ENCODE measurements at regions of chr19 and their contacts with region 1.

Region 1: GRCh38 chr19:28705008-28705407 is 507.9 kb downstream of the UQCRFS1 start:
- DNase-seq: peak; percentile 18 to 20 (median 19)
- ATAC-seq: peak; percentile 86
- H3K4me3 ChIP-seq: no peak overlapping the region
- H3K27ac ChIP-seq: no peak overlapping the region
- H3K4me1 ChIP-seq: no peaks in the 10 kb centered on the region
- H3K27me3 ChIP-seq: no peaks in the 10 kb centered on the region
- CTCF ChIP-seq: peak in 2 of 3 experiments; percentile 28 to 41; a peak in 5 of 6 replicates
- EP300 ChIP-seq: no peak
- POLR2A ChIP-seq: no peak
- RAD21 ChIP-seq: no peak

Region 2: GRCh38 chr19:28466107-28467045 is 238.6 kb before region 1 on chr19:
- CTCF ChIA-PET with region 1: interaction called, 18 read pairs
- POLR2A ChIA-PET with region 1: no interaction called
- in situ Hi-C with region 1: loop called (anchors 5 kb)
- intact Hi-C with region 1: loop called (anchors 5 kb)
- DNase-seq: peak; percentile 66 to 81 (median 71)
- ATAC-seq: peak; percentile 73
- H3K4me3 ChIP-seq: no peak overlapping the region
- H3K27ac ChIP-seq: peak overlapping the region; percentile 6; the same call in 1 of the 3 replicates
- H3K4me1 ChIP-seq: peaks cover 2 to 16% of the 10 kb centered on the region in 2 experiments; a peak in 3 of 5 replicates
- H3K27me3 ChIP-seq: no peaks in the 10 kb centered on the region
- CTCF ChIP-seq: peak; percentile 73 to 84 (median 80)
- EP300 ChIP-seq: no peak
- POLR2A ChIP-seq: no peak
- RAD21 ChIP-seq: peak; percentile 65 to 77

Region 3: DNA sequence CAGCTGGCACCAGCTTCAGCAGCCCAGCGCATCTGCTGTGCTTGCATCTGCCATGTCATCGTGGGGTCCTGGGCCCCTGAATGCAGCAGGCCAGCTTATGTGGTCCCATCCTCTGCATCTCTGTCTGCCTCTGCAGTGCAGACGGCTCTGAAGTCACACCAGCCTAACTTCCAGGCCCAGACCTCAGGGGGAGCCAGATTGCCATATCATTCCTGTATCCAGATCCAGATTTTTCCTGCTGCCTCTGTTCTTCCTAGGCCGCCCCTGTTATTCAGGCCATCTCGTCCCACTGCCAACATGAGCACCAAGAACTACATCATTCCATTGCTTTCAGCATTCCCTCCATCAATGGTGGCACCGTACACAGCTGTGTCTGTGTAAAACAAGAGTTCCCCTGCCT is 63.6 kb before region 1 on chr19:
- CTCF ChIA-PET with region 1: no interaction called
- POLR2A ChIA-PET with region 1: no interaction called
- in situ Hi-C with region 1: no loop called
- intact Hi-C with region 1: loop called (anchors 5 kb)
- DNase-seq: no peak
- ATAC-seq: no peak
- H3K4me3 ChIP-seq: no peak overlapping the region
- H3K27ac ChIP-seq: no peak overlapping the region
- H3K4me1 ChIP-seq: peaks cover 0 to 6% of the 10 kb centered on the region in 2 experiments; a peak in 2 of 5 replicates
- H3K27me3 ChIP-seq: no peaks in the 10 kb centered on the region
- CTCF ChIP-seq: no peak
- EP300 ChIP-seq: no peak
- POLR2A ChIP-seq: no peak
- RAD21 ChIP-seq: no peak

Region 4: GRCh38 chr19:28847468-28847867 is 142.5 kb after region 1 on chr19:
- CTCF ChIA-PET with region 1: no interaction called
- POLR2A ChIA-PET with region 1: no interaction called
- in situ Hi-C with region 1: no loop called
- intact Hi-C with region 1: no loop called
- DNase-seq: no peak
- ATAC-seq: no peak
- H3K4me3 ChIP-seq: no peak overlapping the region
- H3K27ac ChIP-seq: no peak overlapping the region
- H3K4me1 ChIP-seq: no peaks in the 10 kb centered on the region
- H3K27me3 ChIP-seq: peaks cover 0 to 5% of the 10 kb centered on the region in 2 experiments; a peak in 1 of 5 replicates
- CTCF ChIP-seq: no peak
- EP300 ChIP-seq: no peak
- POLR2A ChIP-seq: no peak
- RAD21 ChIP-seq: no peak

Measured in K562 (cell line).